ENCODE measurements at regions of chr5 and their contacts with region 1.

Region 1: GRCh38 chr5:55480781-55481180 is 54.0 kb downstream of the PLPP1 start:
- DNase-seq: no peak
- ATAC-seq: no peak
- H3K4me3 ChIP-seq: no peak overlapping the region
- H3K27ac ChIP-seq: no peak overlapping the region
- H3K4me1 ChIP-seq: peaks cover 0 to 3% of the 10 kb centered on the region in 2 donors
- H3K27me3 ChIP-seq: no peaks in the 10 kb centered on the region

Region 2: DNA sequence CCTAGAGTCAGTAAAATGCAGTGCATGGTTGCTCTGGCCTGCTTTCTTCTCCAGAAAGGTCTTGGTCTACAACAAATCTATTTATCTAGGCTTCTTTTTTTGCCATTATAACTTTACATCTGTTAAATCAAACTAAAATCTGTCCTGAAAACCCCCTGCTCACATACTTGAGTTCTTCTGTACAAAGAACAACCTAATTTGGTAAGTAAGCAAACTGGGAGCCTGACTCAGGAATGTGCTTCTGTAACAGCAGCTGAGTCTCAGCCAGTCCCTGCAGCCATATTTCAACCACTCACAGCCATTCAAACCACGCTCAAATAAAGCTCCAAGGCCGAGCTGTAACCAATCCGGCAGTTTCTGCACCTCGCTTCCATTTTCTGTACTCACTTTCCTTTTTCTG is 41.8 kb before region 1 on chr5:
- intact Hi-C with region 1: no loop called
- DNase-seq: peak in 1 of 2 donors; percentile 55
- ATAC-seq: peak; percentile 77
- H3K4me3 ChIP-seq: no peak overlapping the region
- H3K27ac ChIP-seq: peak overlapping the region; percentile 90 to 95
- H3K4me1 ChIP-seq: peaks cover 5 to 8% of the 10 kb centered on the region in 2 donors
- H3K27me3 ChIP-seq: no peaks in the 10 kb centered on the region

Region 3: GRCh38 chr5:55517804-55518203 is 37.0 kb after region 1 on chr5:
- intact Hi-C with region 1: loop called in 1 of 2 experiments (anchors 5 kb)
- DNase-seq: peak in 1 of 2 donors; percentile 62
- ATAC-seq: no peak
- H3K4me3 ChIP-seq: no peak overlapping the region
- H3K27ac ChIP-seq: no peak overlapping the region
- H3K4me1 ChIP-seq: peaks cover 1 to 6% of the 10 kb centered on the region in 2 donors
- H3K27me3 ChIP-seq: no peaks in the 10 kb centered on the region

Region 4: GRCh38 chr5:55936100-55936693 is 455.4 kb after region 1 on chr5:
- intact Hi-C with region 1: no loop called
- DNase-seq: peak; percentile 87 to 92
- ATAC-seq: peak; percentile 83
- H3K4me3 ChIP-seq: no peak overlapping the region
- H3K27ac ChIP-seq: no peak overlapping the region
- H3K4me1 ChIP-seq: no peaks in the 10 kb centered on the region
- H3K27me3 ChIP-seq: no peaks in the 10 kb centered on the region

Measured in aorta (tissue), 5 donors.